ENCODE measurements at regions of chr17 and their contacts with region 1.

Region 1: DNA sequence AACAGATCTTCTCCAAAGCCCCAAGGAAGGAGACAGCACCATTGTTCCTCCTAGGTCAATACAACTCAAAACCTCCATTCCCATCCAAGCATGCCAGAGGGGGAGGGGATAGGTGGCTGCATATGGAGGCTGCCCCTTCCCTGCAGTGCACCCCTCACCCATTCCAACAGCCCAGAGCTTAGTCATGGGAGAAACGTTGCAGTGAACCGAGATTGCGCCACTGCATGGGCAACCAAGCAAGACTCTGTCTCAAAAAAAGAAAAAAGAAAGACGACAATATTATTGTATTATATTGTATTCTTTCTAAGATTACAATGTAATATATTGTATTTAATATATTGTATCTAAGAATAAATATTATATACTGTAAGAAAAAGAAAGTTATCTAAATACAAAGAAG is 36.4 kb upstream of the CD300E start:
- DNase-seq: no peak
- ATAC-seq: no peak
- H3K4me3 ChIP-seq: no peak overlapping the region
- H3K4me3 Mint-ChIP-seq: no peak overlapping the region
- H3K27ac ChIP-seq: no peak overlapping the region
- H3K27ac Mint-ChIP-seq: no peak overlapping the region
- H3K4me1 ChIP-seq: peaks cover 3 to 5% of the 10 kb centered on the region in 2 donors
- H3K4me1 Mint-ChIP-seq: peaks cover 8% of the 10 kb centered on the region
- H3K27me3 ChIP-seq: peaks cover 0 to 8% (median 2%) of the 10 kb centered on the region in 4 experiments
- H3K27me3 Mint-ChIP-seq: peaks cover 54% of the 10 kb centered on the region
- CTCF ChIP-seq: no peak

Region 2: DNA sequence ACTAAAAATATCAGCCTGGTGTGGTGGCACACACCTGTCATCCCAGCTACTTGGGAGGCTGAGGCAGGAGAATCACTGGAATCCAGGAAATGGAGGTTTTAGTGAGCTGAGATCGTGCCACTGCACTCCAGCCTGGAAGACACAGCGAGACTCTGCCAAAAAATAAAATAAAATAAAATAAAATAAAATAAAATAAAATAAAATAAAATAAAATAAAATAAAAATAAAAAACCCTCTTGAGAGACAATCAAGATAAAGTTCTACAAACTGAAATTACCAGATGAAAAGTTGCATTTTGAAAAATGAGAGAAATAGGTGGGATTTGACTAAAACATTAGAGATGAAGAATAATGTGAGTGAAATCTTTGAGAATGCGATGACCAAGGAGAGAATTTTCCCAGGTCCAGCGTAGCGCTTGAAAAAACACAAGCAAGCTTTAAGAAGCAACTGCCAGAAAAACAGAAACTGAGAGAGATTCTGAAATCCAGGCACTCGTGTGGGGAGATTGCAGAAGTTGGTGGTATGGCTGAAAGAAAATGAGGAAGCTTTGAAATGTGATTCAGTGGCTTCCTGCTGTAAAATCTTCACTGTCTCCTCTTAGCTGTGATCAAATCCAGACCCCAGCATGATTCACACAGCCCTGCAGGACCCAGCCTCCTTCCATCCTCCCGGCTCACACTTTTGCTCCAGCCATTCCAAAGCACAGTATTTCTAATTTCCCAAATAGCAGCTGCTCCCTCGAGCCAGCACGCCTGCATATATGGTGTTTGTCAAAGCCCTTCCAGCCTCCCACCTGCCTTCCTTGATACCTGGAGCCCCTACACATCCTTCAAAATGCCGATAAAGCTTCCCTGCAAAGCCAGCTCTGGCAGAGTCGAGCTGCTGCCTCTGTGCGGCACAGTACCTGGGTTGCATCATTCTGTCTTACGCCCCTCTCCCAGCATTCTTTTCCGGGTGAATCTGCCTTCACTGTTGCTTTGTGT is 28.1 kb before region 1 on chr17:
- CTCF ChIA-PET with region 1: interaction called, 12 read pairs
- POLR2A ChIA-PET with region 1: interaction called, 7 read pairs
- intact Hi-C with region 1: no loop called
- DNase-seq: peak; percentile 76
- ATAC-seq: peak; percentile 76
- H3K4me3 ChIP-seq: peak overlapping the region in 1 of 5 experiments; percentile 29
- H3K4me3 Mint-ChIP-seq: peak overlapping the region; percentile 57
- H3K27ac ChIP-seq: no peak overlapping the region
- H3K27ac Mint-ChIP-seq: peak overlapping the region; percentile 53
- H3K4me1 ChIP-seq: peaks cover 45 to 46% of the 10 kb centered on the region in 2 donors
- H3K4me1 Mint-ChIP-seq: peaks cover 47% of the 10 kb centered on the region
- H3K27me3 ChIP-seq: peaks cover 0 to 12% (median 2%) of the 10 kb centered on the region in 4 experiments
- H3K27me3 Mint-ChIP-seq: peaks cover 11% of the 10 kb centered on the region
- CTCF ChIP-seq: no peak

Region 3: GRCh38 chr17:74671031-74671771 is 11.3 kb after region 1 on chr17:
- CTCF ChIA-PET with region 1: interaction called, 33 read pairs
- POLR2A ChIA-PET with region 1: interaction called, 5 read pairs
- intact Hi-C with region 1: no loop called
- DNase-seq: peak; percentile 80
- ATAC-seq: peak; percentile 86
- H3K4me3 ChIP-seq: no peak overlapping the region
- H3K4me3 Mint-ChIP-seq: no peak overlapping the region
- H3K27ac ChIP-seq: no peak overlapping the region
- H3K27ac Mint-ChIP-seq: no peak overlapping the region
- H3K4me1 ChIP-seq: no peaks in the 10 kb centered on the region
- H3K4me1 Mint-ChIP-seq: no peaks in the 10 kb centered on the region
- H3K27me3 ChIP-seq: peaks cover 0 to 64% (median 50%) of the 10 kb centered on the region in 4 experiments
- H3K27me3 Mint-ChIP-seq: peaks cover 60% of the 10 kb centered on the region
- CTCF ChIP-seq: no peak

Region 4: DNA sequence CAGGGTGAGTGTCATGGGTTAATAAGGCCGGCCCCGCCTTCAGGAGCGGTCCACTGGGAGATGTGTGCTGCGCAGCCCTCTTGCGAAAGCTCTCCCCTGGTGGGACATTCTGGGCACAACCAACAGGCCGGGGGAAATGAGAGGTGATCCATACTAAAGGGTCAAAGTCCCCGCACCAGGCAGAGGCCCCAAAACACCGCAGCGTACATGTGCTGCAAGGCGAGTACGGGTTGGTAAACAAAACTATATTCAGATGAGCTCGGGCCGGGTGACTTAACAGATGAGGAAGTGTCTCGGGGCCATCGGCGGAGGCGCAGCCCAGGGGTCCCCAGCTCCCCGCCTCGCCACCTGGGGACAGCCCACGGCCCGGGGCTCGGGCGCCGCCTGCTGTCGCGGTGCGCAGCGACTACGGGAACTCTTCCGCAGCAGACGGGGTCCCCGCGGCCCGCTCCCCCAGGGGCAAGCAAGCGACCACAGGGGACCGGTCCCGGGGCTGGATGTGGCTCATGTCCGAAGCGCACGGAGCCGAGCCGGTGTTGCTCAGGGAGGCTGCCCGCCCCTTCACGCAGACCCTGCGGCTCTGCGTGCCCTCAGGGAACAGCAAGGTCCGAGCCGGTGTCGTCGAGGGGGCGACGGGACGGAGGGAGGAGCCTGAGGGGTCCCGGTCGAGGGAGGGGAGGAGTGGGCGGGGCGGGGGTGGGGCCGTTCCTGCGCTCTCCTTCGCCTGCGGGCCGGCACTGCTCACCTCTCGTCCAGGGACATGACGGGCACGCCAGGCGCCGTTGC is 76.8 kb after region 1 on chr17 and contains the start of gene RAB37:
- CTCF ChIA-PET with region 1: interaction called, 344 read pairs
- POLR2A ChIA-PET with region 1: interaction called, 55 read pairs
- intact Hi-C with region 1: loop called (anchors 1 kb)
- DNase-seq: peak; percentile 91
- ATAC-seq: peak; percentile 76
- H3K4me3 ChIP-seq: peak within 1 kb of the TSS; percentile 38 to 91 (median 75)
- H3K4me3 Mint-ChIP-seq: peak within 1 kb of the TSS; percentile 87
- H3K27ac ChIP-seq: peak within 1 kb of the TSS; percentile 52 to 74
- H3K27ac Mint-ChIP-seq: peak within 1 kb of the TSS; percentile 98
- H3K4me1 ChIP-seq: peaks cover 40 to 58% of the 10 kb centered on the region in 2 donors
- H3K4me1 Mint-ChIP-seq: peaks cover 42% of the 10 kb centered on the region
- H3K27me3 ChIP-seq: peaks cover 0 to 3% (median 0%) of the 10 kb centered on the region in 4 experiments
- H3K27me3 Mint-ChIP-seq: no peaks in the 10 kb centered on the region
- CTCF ChIP-seq: peak; percentile 68
- total RNA-seq, gene RAB37: 76.0 and 76.8 TPM in 2 replicates

Region 5: DNA sequence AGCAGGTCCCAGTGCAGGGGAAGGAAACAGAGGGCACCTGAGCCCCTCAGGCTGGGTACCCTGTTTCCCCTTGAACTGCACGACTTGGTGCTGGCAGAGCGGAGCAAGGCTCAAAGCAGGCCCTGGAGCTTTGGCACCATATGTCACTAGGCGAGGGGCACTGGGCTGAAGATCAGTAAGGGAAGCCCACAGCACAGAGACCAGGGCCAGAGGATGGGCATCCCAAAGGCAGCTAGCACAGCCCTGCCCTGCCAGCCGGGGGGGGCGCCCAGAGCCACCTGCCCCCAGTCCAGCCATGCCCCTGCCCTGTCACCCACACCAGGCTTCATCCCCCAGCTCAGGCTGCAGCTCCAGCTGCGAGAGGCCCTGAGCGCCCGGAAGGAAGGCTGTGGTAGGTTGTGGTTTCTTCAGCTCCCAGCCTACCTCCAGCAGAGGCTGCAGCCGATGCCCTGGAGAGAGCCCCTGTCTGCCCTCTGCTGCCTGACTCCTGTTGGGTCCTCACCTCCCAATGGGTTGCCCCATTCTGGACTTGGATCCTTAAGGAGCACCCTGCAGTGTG is 99.4 kb after region 1 on chr17:
- CTCF ChIA-PET with region 1: interaction called, 40 read pairs
- POLR2A ChIA-PET with region 1: no interaction called
- intact Hi-C with region 1: loop called (anchors 1 kb)
- DNase-seq: peak; percentile 63
- ATAC-seq: peak; percentile 77
- H3K4me3 ChIP-seq: no peak overlapping the region
- H3K4me3 Mint-ChIP-seq: peak overlapping the region; percentile 56
- H3K27ac ChIP-seq: no peak overlapping the region
- H3K27ac Mint-ChIP-seq: peak overlapping the region; percentile 29
- H3K4me1 ChIP-seq: peaks cover 40 to 52% of the 10 kb centered on the region in 2 donors
- H3K4me1 Mint-ChIP-seq: peaks cover 46% of the 10 kb centered on the region
- H3K27me3 ChIP-seq: no peaks in the 10 kb centered on the region
- H3K27me3 Mint-ChIP-seq: no peaks in the 10 kb centered on the region
- CTCF ChIP-seq: no peak

Region 6: GRCh38 chr17:74790161-74791054 is 130.5 kb after region 1 on chr17:
- CTCF ChIA-PET with region 1: interaction called, 41 read pairs
- POLR2A ChIA-PET with region 1: no interaction called
- intact Hi-C with region 1: no loop called
- DNase-seq: no peak
- ATAC-seq: no peak
- H3K4me3 ChIP-seq: no peak overlapping the region
- H3K4me3 Mint-ChIP-seq: no peak overlapping the region
- H3K27ac ChIP-seq: no peak overlapping the region
- H3K27ac Mint-ChIP-seq: no peak overlapping the region
- H3K4me1 ChIP-seq: peaks cover 8 to 24% of the 10 kb centered on the region in 2 donors
- H3K4me1 Mint-ChIP-seq: peaks cover 22% of the 10 kb centered on the region
- H3K27me3 ChIP-seq: no peaks in the 10 kb centered on the region
- H3K27me3 Mint-ChIP-seq: no peaks in the 10 kb centered on the region
- CTCF ChIP-seq: no peak

Region 7: GRCh38 chr17:74930535-74931036 is 270.7 kb after region 1 on chr17:
- CTCF ChIA-PET with region 1: no interaction called
- POLR2A ChIA-PET with region 1: no interaction called
- intact Hi-C with region 1: no loop called
- DNase-seq: no peak
- ATAC-seq: no peak
- H3K4me3 ChIP-seq: no peak overlapping the region
- H3K4me3 Mint-ChIP-seq: no peak overlapping the region
- H3K27ac ChIP-seq: no peak overlapping the region
- H3K27ac Mint-ChIP-seq: no peak overlapping the region
- H3K4me1 ChIP-seq: no peaks in the 10 kb centered on the region
- H3K4me1 Mint-ChIP-seq: no peaks in the 10 kb centered on the region
- H3K27me3 ChIP-seq: peaks cover 0 to 43% (median 7%) of the 10 kb centered on the region in 4 experiments
- H3K27me3 Mint-ChIP-seq: peaks cover 64% of the 10 kb centered on the region
- CTCF ChIP-seq: no peak

Region 8: GRCh38 chr17:75173526-75173925 is 513.6 kb after region 1 on chr17:
- CTCF ChIA-PET with region 1: no interaction called
- POLR2A ChIA-PET with region 1: no interaction called
- intact Hi-C with region 1: no loop called
- DNase-seq: no peak
- ATAC-seq: no peak
- H3K4me3 ChIP-seq: no peak overlapping the region
- H3K4me3 Mint-ChIP-seq: no peak overlapping the region
- H3K27ac ChIP-seq: no peak overlapping the region
- H3K27ac Mint-ChIP-seq: no peak overlapping the region
- H3K4me1 ChIP-seq: peaks cover 6 to 8% of the 10 kb centered on the region in 2 donors
- H3K4me1 Mint-ChIP-seq: peaks cover 13% of the 10 kb centered on the region
- H3K27me3 ChIP-seq: no peaks in the 10 kb centered on the region
- H3K27me3 Mint-ChIP-seq: no peaks in the 10 kb centered on the region
- CTCF ChIP-seq: no peak